Activated CD4-positive, alpha-beta T cell treated with anti-CD3 and anti-CD28 coated beads for 36 hours (primary cell): ENCODE measurements at regions of chr20 and their contacts with region 1.

Region 1: GRCh38 chr20:44885392-44886265 is at the start of gene YWHAB:
- DNase-seq: peak; percentile 99
- ATAC-seq: peak; percentile 96
- H3K4me3 Mint-ChIP-seq: peak within 1 kb of the TSS; percentile 94
- H3K27ac Mint-ChIP-seq: peak within 1 kb of the TSS; percentile 95
- H3K4me1 Mint-ChIP-seq: peaks cover 58% of the 10 kb centered on the region
- H3K27me3 Mint-ChIP-seq: no peaks in the 10 kb centered on the region
- total RNA-seq, gene YWHAB: 273 to 326 TPM

Region 2: DNA sequence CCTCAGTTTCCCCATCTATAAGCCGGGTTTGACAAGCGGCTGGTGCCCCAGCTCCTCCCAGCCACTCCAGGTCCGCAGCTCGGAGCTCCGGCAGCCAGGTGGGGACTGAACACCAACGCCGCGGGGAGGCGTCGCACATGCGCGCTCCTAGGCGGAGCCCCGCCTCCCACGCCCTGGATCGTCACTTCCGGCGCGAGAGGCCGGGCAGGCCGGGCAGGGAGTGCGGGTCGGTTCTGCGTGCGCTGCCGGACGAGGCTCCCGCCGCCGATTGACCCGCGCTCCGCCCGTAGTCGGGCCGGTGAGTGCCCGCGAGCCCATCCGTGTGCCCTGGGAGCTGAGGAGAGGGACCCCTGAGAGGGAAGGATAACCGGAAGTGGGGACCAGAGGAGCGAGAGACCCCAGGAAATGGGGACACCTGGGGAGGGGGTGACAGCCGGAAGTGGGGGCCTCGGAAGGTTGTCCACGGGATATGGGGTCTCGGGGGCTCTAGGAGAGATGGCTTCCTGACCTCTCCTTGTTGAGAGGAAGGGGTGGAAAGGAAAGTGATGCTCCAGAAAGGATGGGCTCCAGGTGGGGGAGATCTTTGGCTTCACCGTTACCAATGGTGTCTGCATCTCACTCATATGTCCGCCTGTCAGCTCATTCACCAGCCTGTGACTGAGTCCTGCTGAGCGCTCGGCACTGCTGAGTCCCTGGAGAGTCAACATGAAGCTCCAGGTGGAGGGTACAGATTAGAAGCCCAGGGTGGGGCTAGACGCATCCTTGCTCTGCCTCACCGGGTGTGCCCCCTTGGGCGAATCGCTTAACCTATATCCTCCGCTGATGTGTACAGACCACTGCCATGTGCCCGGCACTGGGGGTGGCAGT is 409.7 kb before region 1 on chr20 and contains the start of gene TTPAL:
- CTCF ChIA-PET with region 1: no interaction called
- POLR2A ChIA-PET with region 1: no interaction called
- intact Hi-C with region 1: loop called in 1 of 2 experiments (anchors 1 kb)
- DNase-seq: peak; percentile 96
- ATAC-seq: peak; percentile 97
- H3K4me3 Mint-ChIP-seq: peak within 1 kb of the TSS; percentile 91
- H3K27ac Mint-ChIP-seq: peak within 1 kb of the TSS; percentile 97
- H3K4me1 Mint-ChIP-seq: peaks cover 22% of the 10 kb centered on the region
- H3K27me3 Mint-ChIP-seq: no peaks in the 10 kb centered on the region
- total RNA-seq, gene TTPAL: 18.3 to 21.5 TPM

Region 3: DNA sequence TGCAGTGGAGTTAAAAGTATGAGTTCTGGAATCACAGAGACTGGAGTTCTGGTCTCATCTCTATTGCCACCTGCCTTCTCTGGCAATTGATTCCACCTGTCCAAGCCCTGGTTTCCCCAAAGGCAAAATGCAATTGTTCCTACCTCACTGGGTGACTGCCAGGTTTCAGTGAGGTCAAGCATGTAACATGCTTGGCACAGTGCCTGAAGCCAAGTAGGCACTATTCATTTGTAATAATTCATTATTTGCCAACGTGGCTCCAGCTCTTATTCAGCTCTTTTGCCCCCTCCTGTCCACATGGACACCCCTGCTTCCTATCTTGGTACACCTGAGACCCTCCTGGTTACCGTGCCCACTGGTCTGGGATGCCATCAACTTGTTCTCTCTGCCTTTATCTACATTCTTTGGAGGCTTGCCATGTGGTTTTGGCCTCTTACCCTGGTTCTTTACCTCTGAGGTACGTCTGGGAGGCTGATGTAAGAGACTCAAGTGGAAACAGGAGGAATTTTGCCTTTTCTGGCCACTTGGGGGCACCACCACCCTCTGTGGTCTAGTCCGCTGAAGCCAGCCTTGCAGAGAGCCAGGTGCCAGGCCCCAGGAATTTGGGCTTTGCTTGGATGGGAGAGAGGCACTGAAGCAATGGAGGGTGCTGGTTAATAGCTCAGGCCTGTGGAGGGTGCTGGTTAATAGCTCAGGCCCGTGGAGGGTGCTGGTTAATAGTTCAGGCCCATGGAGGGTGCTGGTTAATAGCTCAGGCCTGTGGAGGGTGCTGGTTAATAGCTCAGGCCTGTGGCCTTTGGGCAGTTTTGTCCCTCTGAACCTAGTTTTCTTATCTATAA is 138.2 kb before region 1 on chr20:
- CTCF ChIA-PET with region 1: no interaction called
- POLR2A ChIA-PET with region 1: no interaction called
- intact Hi-C with region 1: loop called in 1 of 2 experiments (anchors 5 kb)
- DNase-seq: peak; percentile 87
- ATAC-seq: peak; percentile 60
- H3K4me3 Mint-ChIP-seq: peak overlapping the region; percentile 76
- H3K27ac Mint-ChIP-seq: peak overlapping the region; percentile 84
- H3K4me1 Mint-ChIP-seq: peaks cover 19% of the 10 kb centered on the region
- H3K27me3 Mint-ChIP-seq: peaks cover 21% of the 10 kb centered on the region

Region 4: GRCh38 chr20:44909872-44910689 is 24.5 kb after region 1 on chr20 and contains the start of gene PABPC1L:
- CTCF ChIA-PET with region 1: interaction called, 19 read pairs
- POLR2A ChIA-PET with region 1: interaction called, 5 read pairs
- intact Hi-C with region 1: loop called (anchors 1 to 2 kb)
- DNase-seq: peak; percentile 86
- ATAC-seq: peak; percentile 90
- H3K4me3 Mint-ChIP-seq: peak within 1 kb of the TSS; percentile 78
- H3K27ac Mint-ChIP-seq: peak within 1 kb of the TSS; percentile 64
- H3K4me1 Mint-ChIP-seq: peaks cover 34% of the 10 kb centered on the region
- H3K27me3 Mint-ChIP-seq: no peaks in the 10 kb centered on the region
- total RNA-seq, gene PABPC1L: 61.7 to 71.3 TPM

Region 5: DNA sequence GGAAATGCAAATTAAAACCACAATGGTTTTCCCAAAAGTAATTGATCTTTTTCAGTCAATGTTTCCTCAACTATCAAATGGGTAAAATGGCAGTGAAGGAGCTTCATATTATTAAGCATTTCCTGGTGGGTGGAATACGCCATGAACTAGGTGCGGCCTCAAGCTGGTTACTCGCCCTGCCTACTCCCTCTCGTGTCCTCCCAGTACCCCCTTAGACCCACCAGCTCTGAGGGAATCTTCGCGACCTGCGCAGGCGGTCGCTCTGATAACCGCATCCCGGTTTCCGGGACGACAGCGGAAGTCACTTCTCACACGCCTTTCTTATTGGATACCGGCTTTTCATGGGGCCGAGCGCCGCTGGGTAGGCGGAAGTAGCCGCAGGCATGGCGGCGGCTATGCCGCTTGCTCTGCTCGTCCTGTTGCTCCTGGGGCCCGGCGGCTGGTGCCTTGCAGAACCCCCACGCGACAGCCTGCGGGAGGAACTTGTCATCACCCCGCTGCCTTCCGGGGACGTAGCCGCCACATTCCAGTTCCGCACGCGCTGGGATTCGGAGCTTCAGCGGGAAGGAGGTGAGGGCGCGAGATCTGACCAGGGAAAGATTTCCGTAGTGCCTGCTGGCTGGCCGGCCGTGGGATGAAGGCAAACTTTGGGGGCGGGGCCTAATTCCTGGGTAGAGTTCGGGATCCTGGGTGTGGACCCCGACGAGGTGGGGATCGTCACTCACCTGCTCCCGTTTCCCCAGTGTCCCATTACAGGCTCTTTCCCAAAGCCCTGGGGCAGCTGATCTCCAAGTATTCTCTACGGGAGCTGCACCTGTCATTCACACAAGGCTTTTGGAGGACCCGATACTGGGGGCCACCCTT is 530.4 kb after region 1 on chr20 and contains the start of gene PIGT:
- CTCF ChIA-PET with region 1: no interaction called
- POLR2A ChIA-PET with region 1: no interaction called
- intact Hi-C with region 1: loop called in 1 of 2 experiments (anchors 5 kb)
- DNase-seq: peak; percentile 93
- ATAC-seq: peak; percentile 93
- H3K4me3 Mint-ChIP-seq: peak within 1 kb of the TSS; percentile 94
- H3K27ac Mint-ChIP-seq: peak within 1 kb of the TSS; percentile 97
- H3K4me1 Mint-ChIP-seq: peaks cover 44% of the 10 kb centered on the region
- H3K27me3 Mint-ChIP-seq: no peaks in the 10 kb centered on the region
- total RNA-seq, gene PIGT: 44.0 to 65.7 TPM

Region 6: DNA sequence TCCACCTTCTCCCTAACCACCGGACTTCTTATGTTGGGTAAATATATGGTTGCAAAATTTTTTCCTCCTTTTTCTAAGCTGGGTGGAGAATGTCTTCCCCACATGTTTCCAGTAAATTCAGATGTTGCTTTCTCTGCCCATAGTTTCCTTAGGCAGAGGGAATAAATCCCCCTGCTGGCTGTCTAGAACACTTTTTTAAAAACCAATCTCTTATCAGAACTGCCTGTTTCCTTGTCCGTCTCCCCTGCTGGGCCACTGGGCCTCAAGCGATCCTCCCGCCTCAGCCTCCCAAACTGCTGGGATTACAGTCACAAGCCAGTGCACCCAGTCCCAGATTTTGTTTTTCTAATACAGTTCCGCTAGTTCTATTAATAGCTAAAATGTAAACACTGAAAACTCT is 574.0 kb after region 1 on chr20:
- CTCF ChIA-PET with region 1: no interaction called
- POLR2A ChIA-PET with region 1: no interaction called
- intact Hi-C with region 1: no loop called
- DNase-seq: no peak
- ATAC-seq: no peak
- H3K4me3 Mint-ChIP-seq: no peak overlapping the region
- H3K27ac Mint-ChIP-seq: no peak overlapping the region
- H3K4me1 Mint-ChIP-seq: no peaks in the 10 kb centered on the region
- H3K27me3 Mint-ChIP-seq: peaks cover 4% of the 10 kb centered on the region